HepG2 (cell line): ENCODE measurements at regions of chr5 and their contacts with region 1.

Region 1: GRCh38 chr5:173887610-173888472 is at the start of gene CPEB4:
- DNase-seq: peak; percentile 99
- ATAC-seq: peak; percentile 98
- H3K4me3 ChIP-seq: peak within 1 kb of the TSS; percentile 79 to 90 (median 81)
- H3K27ac ChIP-seq: peak within 1 kb of the TSS; percentile 92
- H3K4me1 ChIP-seq: peaks cover 48% of the 10 kb centered on the region
- H3K27me3 ChIP-seq: no peaks in the 10 kb centered on the region
- CTCF ChIP-seq: no peak
- EP300 ChIP-seq: no peak
- POLR2A ChIP-seq: peak; percentile 83 to 84
- RAD21 ChIP-seq: no peak
- total RNA-seq, gene CPEB4: 7.7 and 8.3 TPM in 2 replicates

Region 2: GRCh38 chr5:173615884-173616576 is 271.8 kb before region 1 on chr5:
- CTCF ChIA-PET with region 1: no interaction called
- POLR2A ChIA-PET with region 1: interaction called, 5 read pairs
- in situ Hi-C with region 1: no loop called
- intact Hi-C with region 1: loop called (anchors 1 kb)
- DNase-seq: peak; percentile 76
- ATAC-seq: peak; percentile 78
- H3K4me3 ChIP-seq: peak overlapping the region; percentile 83 to 92 (median 86)
- H3K27ac ChIP-seq: peak overlapping the region; percentile 79
- H3K4me1 ChIP-seq: peaks cover 61% of the 10 kb centered on the region
- H3K27me3 ChIP-seq: no peaks in the 10 kb centered on the region; a peak in 1 of 5 replicates
- CTCF ChIP-seq: peak; percentile 57
- EP300 ChIP-seq: no peak
- POLR2A ChIP-seq: peak in 1 of 2 experiments; percentile 41; a peak in 1 of 4 replicates
- RAD21 ChIP-seq: no peak; the same call in 1 of the 2 replicates

Region 3: GRCh38 chr5:173789031-173789920 is 98.6 kb before region 1 on chr5:
- CTCF ChIA-PET with region 1: no interaction called
- POLR2A ChIA-PET with region 1: interaction called, 10 read pairs
- in situ Hi-C with region 1: no loop called
- intact Hi-C with region 1: no loop called
- DNase-seq: peak; percentile 79
- ATAC-seq: peak; percentile 86
- H3K4me3 ChIP-seq: peak overlapping the region in 2 of 3 experiments; percentile 8 to 48; a peak in 2 of 6 replicates
- H3K27ac ChIP-seq: peak overlapping the region; percentile 73
- H3K4me1 ChIP-seq: peaks cover 68% of the 10 kb centered on the region
- H3K27me3 ChIP-seq: no peaks in the 10 kb centered on the region
- CTCF ChIP-seq: no peak
- EP300 ChIP-seq: peak in 1 of 2 experiments; percentile 82; a peak in 2 of 4 replicates
- POLR2A ChIP-seq: no peak
- RAD21 ChIP-seq: no peak; the same call in 1 of the 2 replicates

Region 4: DNA sequence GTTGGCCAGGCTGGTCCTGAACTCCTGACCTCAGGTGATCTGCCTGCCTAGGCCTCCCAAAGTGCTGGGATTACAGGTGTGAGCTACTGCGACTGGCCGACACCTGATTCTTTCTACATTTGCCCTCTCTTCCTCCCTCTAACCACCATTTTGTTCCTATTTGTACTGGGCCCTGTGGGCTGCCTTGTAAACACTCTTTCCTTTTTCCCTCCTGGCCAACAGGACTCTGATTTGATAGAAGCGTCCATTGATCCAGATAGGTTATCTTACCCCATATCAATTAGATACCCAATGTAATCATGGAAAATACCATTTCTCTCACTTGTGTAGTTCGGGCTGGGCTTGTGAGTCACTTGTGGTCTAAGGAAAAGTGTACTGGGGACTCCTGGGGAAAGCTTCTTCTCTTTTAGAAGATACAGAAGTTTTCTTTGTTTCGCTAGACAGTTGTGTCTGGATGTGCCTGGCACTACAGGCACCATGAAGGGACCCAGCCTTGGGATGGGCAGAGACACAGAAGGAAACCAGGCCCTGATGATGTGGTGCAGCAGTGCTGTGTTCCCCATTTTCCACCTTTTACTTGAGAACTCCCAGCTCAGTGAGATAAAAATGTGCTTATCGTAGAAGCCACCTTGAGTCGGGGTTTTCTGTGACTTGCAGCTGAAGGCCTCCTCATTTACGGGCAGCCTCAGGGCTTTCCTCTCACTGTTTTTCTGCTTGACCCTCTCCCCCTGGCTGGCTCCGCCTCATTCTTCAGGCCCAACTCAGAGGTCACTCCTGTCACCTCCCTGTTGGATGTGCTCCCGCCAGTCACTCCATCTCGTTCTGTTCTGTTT is 32.5 kb before region 1 on chr5:
- CTCF ChIA-PET with region 1: no interaction called
- POLR2A ChIA-PET with region 1: no interaction called
- in situ Hi-C with region 1: no loop called
- intact Hi-C with region 1: no loop called
- DNase-seq: no peak
- ATAC-seq: no peak; the same call in 2 of the 3 replicates
- H3K4me3 ChIP-seq: no peak overlapping the region
- H3K27ac ChIP-seq: no peak overlapping the region
- H3K4me1 ChIP-seq: peaks cover 64% of the 10 kb centered on the region
- H3K27me3 ChIP-seq: peaks cover 0 to 4% of the 10 kb centered on the region in 2 experiments; a peak in 2 of 5 replicates
- CTCF ChIP-seq: no peak
- EP300 ChIP-seq: no peak
- POLR2A ChIP-seq: no peak
- RAD21 ChIP-seq: no peak

Region 5: GRCh38 chr5:173872957-173873305 is 14.9 kb before region 1 on chr5:
- CTCF ChIA-PET with region 1: no interaction called
- POLR2A ChIA-PET with region 1: interaction called, 14 read pairs
- in situ Hi-C with region 1: no loop called
- intact Hi-C with region 1: no loop called
- DNase-seq: peak; percentile 26
- ATAC-seq: peak; percentile 75
- H3K4me3 ChIP-seq: peak overlapping the region; percentile 4 to 52 (median 13); a peak in 3 of 6 replicates
- H3K27ac ChIP-seq: no peak overlapping the region
- H3K4me1 ChIP-seq: peaks cover 52% of the 10 kb centered on the region
- H3K27me3 ChIP-seq: no peaks in the 10 kb centered on the region
- CTCF ChIP-seq: no peak
- EP300 ChIP-seq: no peak
- POLR2A ChIP-seq: no peak
- RAD21 ChIP-seq: no peak

Region 6: GRCh38 chr5:174259696-174260420 is 372.0 kb after region 1 on chr5:
- CTCF ChIA-PET with region 1: no interaction called
- POLR2A ChIA-PET with region 1: no interaction called
- in situ Hi-C with region 1: no loop called
- intact Hi-C with region 1: no loop called
- DNase-seq: no peak
- ATAC-seq: no peak
- H3K4me3 ChIP-seq: no peak overlapping the region
- H3K27ac ChIP-seq: no peak overlapping the region
- H3K4me1 ChIP-seq: no peaks in the 10 kb centered on the region
- H3K27me3 ChIP-seq: no peaks in the 10 kb centered on the region
- CTCF ChIP-seq: no peak
- EP300 ChIP-seq: no peak
- POLR2A ChIP-seq: no peak
- RAD21 ChIP-seq: no peak